ENCODE measurements at regions of chr18 and their contacts with region 1.

Region 1: DNA sequence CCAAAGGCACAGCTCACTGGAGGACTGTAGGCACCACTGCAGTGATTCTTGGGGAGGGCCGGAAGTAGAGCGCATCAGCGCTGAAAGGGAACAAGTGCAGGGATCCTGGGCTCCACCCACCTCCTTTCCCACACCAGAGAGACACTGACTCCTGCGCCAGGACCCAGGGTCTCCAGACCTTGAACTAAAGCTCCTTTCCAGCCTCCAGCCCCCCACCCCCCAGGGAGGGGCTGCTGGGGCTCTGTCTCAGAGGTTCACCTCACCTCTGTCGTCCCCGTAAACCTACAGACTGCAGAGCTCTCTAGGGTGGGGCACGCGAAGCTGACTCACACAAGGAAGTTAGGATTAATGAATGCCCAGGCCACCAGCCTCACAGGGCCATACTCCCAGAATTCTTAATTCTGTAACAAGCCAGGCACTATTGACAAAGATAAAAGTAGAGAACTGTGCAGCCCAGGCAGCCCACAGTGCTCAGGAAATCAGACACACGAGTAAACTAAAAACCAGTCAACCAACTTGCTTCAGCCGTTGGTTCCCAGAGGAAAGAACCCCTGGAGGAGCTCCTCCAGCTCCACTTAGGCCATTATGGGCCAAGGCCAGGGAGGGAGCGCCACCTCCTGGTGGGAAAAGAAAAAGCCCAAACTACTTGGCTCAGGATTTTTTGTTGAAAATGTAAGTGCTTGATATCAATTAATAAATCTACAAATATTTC is 45.1 kb upstream of the ACAA2 start:
- DNase-seq: peak; percentile 79
- ATAC-seq: peak; percentile 75
- H3K4me3 Mint-ChIP-seq: no peak overlapping the region
- H3K27ac Mint-ChIP-seq: peak overlapping the region; percentile 57
- H3K4me1 Mint-ChIP-seq: peaks cover 12% of the 10 kb centered on the region
- H3K27me3 Mint-ChIP-seq: no peaks in the 10 kb centered on the region
- CTCF ChIP-seq: peak; percentile 86

Region 2: DNA sequence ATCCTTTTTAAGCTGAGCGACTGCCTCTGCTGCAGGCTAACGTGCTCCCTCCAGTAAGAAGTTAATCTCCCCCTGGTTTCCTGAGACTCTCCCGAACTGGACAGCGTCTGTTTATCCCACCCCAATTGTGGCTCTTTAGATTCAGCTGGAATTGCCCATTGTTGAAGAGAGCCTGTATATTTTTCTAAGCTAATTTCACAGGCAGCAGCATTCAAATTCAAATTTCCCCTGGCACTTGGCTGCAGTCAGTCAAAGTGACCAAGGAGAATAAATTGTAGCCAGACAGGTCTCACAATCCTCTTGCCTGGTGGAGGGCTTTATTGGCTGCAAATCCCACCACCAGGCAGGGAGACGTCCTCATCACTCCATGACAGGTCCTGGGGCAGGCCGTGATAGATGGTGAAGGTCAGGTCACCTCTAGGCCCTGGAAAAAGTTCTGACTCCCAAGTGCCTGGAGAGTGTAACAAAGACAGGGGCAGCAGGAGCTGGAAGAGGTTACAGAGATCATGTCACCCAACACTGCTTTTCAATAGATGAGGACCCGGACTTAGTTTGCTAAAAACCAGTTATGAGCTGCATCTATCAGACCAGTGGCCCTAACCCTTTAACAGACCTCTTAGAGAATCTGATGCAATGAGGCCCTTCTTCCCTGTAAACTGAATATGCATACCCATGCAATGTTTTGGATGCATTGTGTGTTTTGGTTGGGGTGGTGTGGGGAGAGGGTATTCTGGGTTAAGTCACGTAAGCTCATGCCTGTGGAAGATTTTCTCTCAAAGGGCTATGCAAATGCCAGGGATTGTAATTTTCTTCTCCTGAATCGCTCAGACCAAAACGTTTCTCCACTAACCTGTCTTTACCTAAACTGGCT is 339.1 kb before region 1 on chr18:
- CTCF ChIA-PET with region 1: interaction called, 10 read pairs
- POLR2A ChIA-PET with region 1: no interaction called
- DNase-seq: no peak
- ATAC-seq: peak; percentile 42
- H3K4me3 Mint-ChIP-seq: no peak overlapping the region
- H3K27ac Mint-ChIP-seq: peak overlapping the region; percentile 42
- H3K4me1 Mint-ChIP-seq: peaks cover 42% of the 10 kb centered on the region
- H3K27me3 Mint-ChIP-seq: no peaks in the 10 kb centered on the region
- CTCF ChIP-seq: no peak

Region 3: DNA sequence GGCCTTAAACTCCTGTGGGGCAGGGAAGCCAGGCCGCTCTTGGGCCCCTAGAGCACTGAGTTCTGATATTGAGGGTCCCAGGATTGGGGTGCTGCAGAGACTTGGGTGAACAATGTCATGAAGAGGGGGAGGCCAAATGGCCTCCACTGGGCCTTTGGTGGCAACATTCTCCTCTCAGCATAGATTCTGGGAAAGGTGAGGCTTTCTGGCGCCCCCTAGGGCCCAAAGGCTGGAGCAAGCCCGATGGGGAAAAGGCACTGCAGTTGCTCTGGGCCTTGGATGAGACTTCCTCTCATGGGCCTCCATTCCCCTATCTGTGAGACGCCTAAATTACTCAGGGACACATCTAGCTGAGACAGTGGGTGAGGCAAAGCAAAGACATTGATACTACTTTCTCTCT is 129.9 kb before region 1 on chr18:
- CTCF ChIA-PET with region 1: interaction called, 11 read pairs
- POLR2A ChIA-PET with region 1: no interaction called
- DNase-seq: peak; percentile 81
- ATAC-seq: peak; percentile 38
- H3K4me3 Mint-ChIP-seq: no peak overlapping the region
- H3K27ac Mint-ChIP-seq: no peak overlapping the region
- H3K4me1 Mint-ChIP-seq: peaks cover 38% of the 10 kb centered on the region
- H3K27me3 Mint-ChIP-seq: no peaks in the 10 kb centered on the region
- CTCF ChIP-seq: peak; percentile 69

Region 4: GRCh38 chr18:49784427-49785185 is 73.9 kb before region 1 on chr18:
- CTCF ChIA-PET with region 1: interaction called, 16 read pairs
- POLR2A ChIA-PET with region 1: no interaction called
- DNase-seq: no peak
- ATAC-seq: no peak
- H3K4me3 Mint-ChIP-seq: no peak overlapping the region
- H3K27ac Mint-ChIP-seq: no peak overlapping the region
- H3K4me1 Mint-ChIP-seq: no peaks in the 10 kb centered on the region
- H3K27me3 Mint-ChIP-seq: no peaks in the 10 kb centered on the region
- CTCF ChIP-seq: no peak

Region 5: DNA sequence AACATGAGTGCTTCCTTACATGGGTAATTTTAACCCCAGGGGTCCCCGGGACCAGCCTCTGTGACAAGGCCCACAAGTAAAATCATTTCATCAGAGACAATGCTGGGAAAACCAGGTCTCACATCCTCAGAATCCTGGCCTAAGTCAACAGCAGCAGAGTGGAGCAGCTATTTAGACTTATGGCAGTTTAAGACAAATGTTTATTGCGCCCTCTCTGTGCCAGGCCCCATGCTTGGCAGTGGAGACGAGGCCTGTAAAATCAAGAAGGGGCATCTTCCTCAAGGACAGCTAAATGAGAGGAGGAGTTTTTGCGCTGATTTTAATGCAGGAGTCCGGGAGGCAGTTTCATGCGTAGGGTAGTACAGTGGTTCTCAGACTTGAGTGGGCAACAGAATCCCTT is 10.9 kb after region 1 on chr18:
- CTCF ChIA-PET with region 1: interaction called, 19 read pairs
- POLR2A ChIA-PET with region 1: no interaction called
- DNase-seq: no peak
- ATAC-seq: no peak
- H3K4me3 Mint-ChIP-seq: no peak overlapping the region
- H3K27ac Mint-ChIP-seq: no peak overlapping the region
- H3K4me1 Mint-ChIP-seq: no peaks in the 10 kb centered on the region
- H3K27me3 Mint-ChIP-seq: no peaks in the 10 kb centered on the region
- CTCF ChIP-seq: no peak

Region 6: GRCh38 chr18:49959176-49959575 is 100.7 kb after region 1 on chr18:
- CTCF ChIA-PET with region 1: no interaction called
- POLR2A ChIA-PET with region 1: no interaction called
- DNase-seq: no peak
- ATAC-seq: no peak
- H3K4me3 Mint-ChIP-seq: no peak overlapping the region
- H3K27ac Mint-ChIP-seq: no peak overlapping the region; the same call in 1 of the 2 replicates
- H3K4me1 Mint-ChIP-seq: no peaks in the 10 kb centered on the region
- H3K27me3 Mint-ChIP-seq: no peaks in the 10 kb centered on the region; the same call in 1 of the 2 replicates
- CTCF ChIP-seq: no peak

Region 7: DNA sequence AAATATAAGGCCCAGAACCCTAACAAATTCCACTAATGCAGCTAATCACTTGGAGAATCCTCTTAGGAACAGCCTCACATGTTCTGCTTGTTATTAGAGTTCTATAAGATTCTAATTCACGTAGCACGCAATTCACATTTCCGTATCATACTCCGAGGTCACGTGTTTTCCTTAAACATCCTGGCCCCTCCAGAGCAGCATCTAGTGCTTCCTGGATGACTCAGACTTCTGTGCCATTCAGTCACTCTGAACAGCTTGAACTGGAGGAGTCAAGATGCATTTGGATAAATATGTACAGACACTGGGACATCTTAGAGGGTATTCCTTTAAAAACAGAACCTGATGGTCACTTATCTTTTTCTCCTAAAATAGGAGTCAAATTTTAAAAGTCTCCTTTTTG is 180.0 kb after region 1 on chr18:
- CTCF ChIA-PET with region 1: no interaction called
- POLR2A ChIA-PET with region 1: no interaction called
- DNase-seq: no peak
- ATAC-seq: no peak
- H3K4me3 Mint-ChIP-seq: no peak overlapping the region
- H3K27ac Mint-ChIP-seq: no peak overlapping the region
- H3K4me1 Mint-ChIP-seq: peaks cover 7% of the 10 kb centered on the region
- H3K27me3 Mint-ChIP-seq: no peaks in the 10 kb centered on the region
- CTCF ChIP-seq: no peak

Region 8: DNA sequence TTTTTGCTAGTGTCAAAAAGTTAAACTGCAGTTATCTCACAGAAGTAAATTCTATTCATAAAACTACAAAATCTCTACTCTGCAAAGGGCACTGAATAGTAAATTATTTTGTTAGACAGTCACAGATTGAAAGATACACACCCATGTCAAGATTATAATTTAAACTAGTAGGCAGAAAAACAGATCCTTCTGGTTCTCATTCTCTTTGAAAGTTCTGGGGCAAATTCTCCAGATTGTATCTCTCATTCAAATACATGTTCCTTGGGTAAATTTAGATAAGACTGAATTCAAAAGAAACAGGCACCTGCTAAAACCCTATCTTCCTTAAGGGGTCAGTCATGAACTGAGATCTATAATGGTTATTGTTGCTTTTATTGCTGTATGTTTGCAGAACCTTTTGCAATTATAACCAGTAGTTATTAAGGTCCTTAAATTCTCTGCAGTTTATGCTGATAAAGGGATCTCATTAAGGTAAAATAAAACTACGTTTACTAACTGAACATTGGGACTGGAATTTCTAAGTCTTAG is 252.9 kb after region 1 on chr18:
- CTCF ChIA-PET with region 1: no interaction called
- POLR2A ChIA-PET with region 1: no interaction called
- DNase-seq: no peak
- ATAC-seq: no peak
- H3K4me3 Mint-ChIP-seq: no peak overlapping the region
- H3K27ac Mint-ChIP-seq: no peak overlapping the region
- H3K4me1 Mint-ChIP-seq: peaks cover 3% of the 10 kb centered on the region; the same call in 1 of the 2 replicates
- H3K27me3 Mint-ChIP-seq: no peaks in the 10 kb centered on the region; the same call in 1 of the 2 replicates
- CTCF ChIP-seq: no peak

Region 9: DNA sequence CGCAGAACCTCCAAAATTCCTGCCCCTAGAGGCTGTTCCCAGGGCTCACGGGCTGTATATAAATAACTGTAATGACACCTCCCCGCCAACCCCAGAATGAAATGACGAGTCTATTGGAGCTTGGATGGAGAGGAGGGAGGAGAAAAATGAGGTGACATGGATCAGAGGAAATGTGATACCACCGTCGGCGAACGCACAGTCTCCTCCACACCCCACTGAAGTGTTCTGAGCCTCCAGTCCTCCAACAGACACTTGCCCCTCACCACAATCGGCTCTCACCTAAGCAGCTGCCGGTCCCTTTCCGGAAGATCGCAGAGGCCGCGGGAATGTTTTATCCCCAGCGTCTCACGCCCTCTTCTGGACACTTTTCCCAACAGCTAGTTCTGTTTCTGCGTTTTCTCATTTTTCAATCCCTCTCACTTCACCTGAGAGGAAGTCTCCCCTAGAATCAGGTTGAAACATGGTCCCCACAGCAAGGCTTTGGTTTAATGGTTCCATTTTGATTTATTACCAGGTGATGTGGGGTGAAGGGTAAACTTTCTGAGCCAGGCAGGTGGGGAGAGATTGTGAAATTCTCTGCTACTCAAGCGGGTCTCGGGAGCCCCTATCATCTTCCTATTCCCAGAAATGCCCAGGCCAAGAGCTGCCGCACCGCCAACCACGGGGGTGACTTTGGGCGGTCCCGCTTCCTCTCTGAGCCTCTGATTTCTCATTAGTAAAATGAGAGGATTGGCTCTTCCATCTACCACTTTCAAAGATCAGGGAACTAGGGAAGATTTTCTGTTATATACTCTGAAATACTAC is 345.5 kb after region 1 on chr18:
- CTCF ChIA-PET with region 1: interaction called, 10 read pairs
- POLR2A ChIA-PET with region 1: interaction called, 3 read pairs
- DNase-seq: peak; percentile 74
- ATAC-seq: peak; percentile 90
- H3K4me3 Mint-ChIP-seq: peak overlapping the region; percentile 62
- H3K27ac Mint-ChIP-seq: no peak overlapping the region
- H3K4me1 Mint-ChIP-seq: peaks cover 5% of the 10 kb centered on the region
- H3K27me3 Mint-ChIP-seq: peaks cover 17% of the 10 kb centered on the region
- CTCF ChIP-seq: peak; percentile 20; the same call in 1 of the 2 replicates